ENCODE measurements at regions of chr17 and their contacts with region 1.

Region 1: GRCh38 chr17:57995076-57995956 is 7.3 kb upstream of the VEZF1 start:
- DNase-seq: peak; percentile 67
- H3K4me3 Mint-ChIP-seq: no peak overlapping the region
- H3K27ac Mint-ChIP-seq: no peak overlapping the region
- H3K4me1 Mint-ChIP-seq: peaks cover 48% of the 10 kb centered on the region
- H3K27me3 Mint-ChIP-seq: no peaks in the 10 kb centered on the region

Region 2: DNA sequence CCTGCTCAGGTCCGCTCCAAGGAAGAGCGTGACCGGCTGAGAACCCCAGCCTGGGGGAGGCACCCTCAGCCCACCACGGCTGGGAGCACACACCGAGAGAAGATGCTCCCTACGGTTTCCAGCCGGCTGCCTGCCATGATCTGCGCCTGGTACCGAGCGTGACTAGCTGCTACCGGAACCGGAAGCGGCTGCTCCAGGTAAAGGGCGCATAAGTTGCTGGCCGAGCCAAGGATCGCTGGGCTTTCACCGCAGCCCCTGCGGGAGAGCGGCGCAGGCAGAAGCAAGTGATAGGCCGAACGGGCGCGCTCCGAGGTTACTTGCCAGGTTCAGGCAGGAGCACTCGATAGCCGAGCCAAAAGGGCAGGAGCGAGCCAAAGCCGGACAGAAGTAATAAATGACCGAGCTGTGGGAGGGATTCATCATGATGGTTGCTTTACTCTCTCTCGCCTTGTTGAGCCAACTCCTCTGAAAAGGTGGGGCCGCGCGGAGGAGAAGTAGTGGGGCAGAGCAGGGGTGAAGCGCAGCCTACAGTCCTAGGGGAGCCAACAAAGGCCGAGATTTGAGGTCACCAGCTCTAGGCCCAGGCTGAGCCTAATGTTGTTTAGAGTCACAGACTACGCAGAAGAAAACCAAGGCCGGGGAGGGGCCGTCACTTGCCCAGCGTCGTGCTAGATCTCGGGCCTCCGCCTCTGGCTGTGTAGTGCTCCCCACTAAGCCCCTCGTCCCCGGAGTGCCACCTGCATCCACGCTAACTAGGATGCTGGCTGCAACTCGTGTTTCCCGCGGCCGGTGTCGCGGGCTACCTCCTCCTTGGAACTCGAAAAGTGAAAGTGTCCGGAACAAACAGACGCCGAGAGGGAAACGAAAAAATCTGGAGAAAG is 145.2 kb before region 1 on chr17 and contains the start of gene MRPS23:
- CTCF ChIA-PET with region 1: interaction called, 207 read pairs
- DNase-seq: peak; percentile 98
- H3K4me3 Mint-ChIP-seq: peak within 1 kb of the TSS; percentile 85
- H3K27ac Mint-ChIP-seq: peak within 1 kb of the TSS; percentile 97
- H3K4me1 Mint-ChIP-seq: peaks cover 43% of the 10 kb centered on the region
- H3K27me3 Mint-ChIP-seq: peaks cover 8% of the 10 kb centered on the region

Region 3: DNA sequence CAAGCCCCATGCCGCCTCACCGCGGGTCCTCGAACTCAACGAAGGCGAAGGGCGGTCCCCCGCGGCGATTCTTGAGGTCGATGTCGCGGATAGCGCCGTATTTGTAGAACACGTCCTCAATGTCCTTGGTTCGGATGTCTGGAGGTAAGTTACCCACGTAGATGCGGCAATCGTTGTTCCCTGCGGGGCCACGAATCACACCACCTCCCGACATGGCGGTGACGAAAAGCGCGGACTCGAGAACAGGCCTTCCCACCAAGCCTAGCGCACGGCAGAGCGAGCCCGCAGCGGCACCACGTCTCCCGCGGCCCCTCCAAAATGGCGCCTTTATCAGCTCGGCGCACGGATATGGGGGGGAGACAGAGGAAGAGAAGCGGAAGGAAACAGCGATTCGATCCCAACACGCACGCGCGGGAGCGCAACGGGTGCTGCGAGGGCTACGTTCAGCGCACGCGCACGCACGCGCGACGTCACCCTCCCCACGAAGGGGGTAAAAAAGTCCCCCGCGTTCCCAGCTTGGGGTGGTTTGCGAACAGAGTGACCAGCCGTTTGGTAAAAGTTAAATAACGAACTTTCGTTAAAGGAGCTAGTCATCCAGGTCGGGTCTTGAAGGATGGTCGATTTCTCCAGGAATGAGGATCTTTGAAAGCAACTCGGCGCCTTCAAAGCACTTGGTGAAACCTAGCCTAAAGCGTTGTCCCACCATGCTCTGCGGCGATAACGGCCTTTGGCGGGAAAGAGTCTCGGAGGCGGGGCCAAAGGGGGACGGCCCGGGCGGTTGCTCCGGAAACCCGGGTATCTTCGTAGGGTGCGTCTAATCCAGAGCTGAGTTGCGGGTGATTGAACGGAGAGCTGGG is 11.8 kb after region 1 on chr17 and contains the start of gene SRSF1:
- CTCF ChIA-PET with region 1: interaction called, 14 read pairs
- DNase-seq: peak; percentile 98
- H3K4me3 Mint-ChIP-seq: peak within 1 kb of the TSS; percentile 99
- H3K27ac Mint-ChIP-seq: peak within 1 kb of the TSS; percentile 99
- H3K4me1 Mint-ChIP-seq: peaks cover 52% of the 10 kb centered on the region
- H3K27me3 Mint-ChIP-seq: no peaks in the 10 kb centered on the region

Region 4: GRCh38 chr17:58156839-58157803 is 161.8 kb after region 1 on chr17:
- CTCF ChIA-PET with region 1: no interaction called
- DNase-seq: peak; percentile 73
- H3K4me3 Mint-ChIP-seq: peak overlapping the region; percentile 80
- H3K27ac Mint-ChIP-seq: peak overlapping the region; percentile 90
- H3K4me1 Mint-ChIP-seq: peaks cover 73% of the 10 kb centered on the region
- H3K27me3 Mint-ChIP-seq: peaks cover 4% of the 10 kb centered on the region

Region 5: GRCh38 chr17:58172369-58173071 is 177.2 kb after region 1 on chr17:
- CTCF ChIA-PET with region 1: interaction called, 11 read pairs
- DNase-seq: peak; percentile 72
- H3K4me3 Mint-ChIP-seq: no peak overlapping the region
- H3K27ac Mint-ChIP-seq: no peak overlapping the region
- H3K4me1 Mint-ChIP-seq: peaks cover 35% of the 10 kb centered on the region
- H3K27me3 Mint-ChIP-seq: peaks cover 26% of the 10 kb centered on the region